Aorta (tissue), 5 donors: ENCODE measurements at regions of chr2 and their contacts with region 1.

Region 1: GRCh38 chr2:108533832-108534583 is at the start of gene LIMS1:
- DNase-seq: peak; percentile 95 to 98
- ATAC-seq: peak; percentile 98
- H3K4me3 ChIP-seq: peak within 1 kb of the TSS; percentile 70 to 99
- H3K27ac ChIP-seq: peak within 1 kb of the TSS; percentile 54 to 94
- H3K4me1 ChIP-seq: peaks cover 0 to 4% of the 10 kb centered on the region in 2 donors
- H3K27me3 ChIP-seq: no peaks in the 10 kb centered on the region
- total RNA-seq, gene LIMS1: 76.7 to 100 TPM

Region 2: DNA sequence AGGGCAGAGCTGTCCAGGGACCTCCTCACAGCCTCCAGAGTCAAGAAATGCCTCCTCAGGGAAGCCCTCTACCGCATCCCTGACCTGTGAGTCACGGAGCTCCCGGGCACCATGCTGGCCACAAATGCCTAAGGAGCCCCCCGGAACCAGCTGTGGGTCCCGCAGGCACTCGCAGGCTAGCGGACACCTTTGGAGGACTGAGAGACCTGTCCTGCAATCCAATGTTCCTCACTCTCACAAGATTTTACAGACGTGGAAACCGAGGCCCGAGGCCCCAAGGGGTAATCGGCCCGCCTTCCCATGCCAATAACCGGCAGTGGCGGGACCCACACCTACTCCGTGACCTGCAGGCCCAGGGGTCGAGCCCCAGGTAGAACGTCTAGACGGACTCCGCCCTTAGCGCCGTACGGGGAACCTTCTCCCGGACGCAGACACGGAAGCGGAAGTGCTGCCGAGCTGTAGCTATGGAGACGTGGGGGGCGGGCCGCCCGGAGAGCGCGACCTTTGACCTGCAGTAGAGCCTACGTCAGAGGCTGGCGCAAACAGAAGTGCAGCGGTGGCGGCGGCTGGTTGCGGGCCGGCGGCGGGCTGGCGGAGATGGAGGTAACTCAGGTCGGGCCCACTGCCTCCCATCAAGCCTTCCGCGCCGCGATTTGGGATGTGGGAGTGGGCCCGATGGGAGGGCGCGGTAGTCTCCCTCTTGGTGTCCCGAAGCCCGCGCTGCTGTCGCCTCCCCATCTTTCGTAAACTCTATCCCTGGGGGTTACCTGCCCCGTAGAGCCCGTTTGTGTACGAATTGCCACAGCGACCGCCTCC is 85.1 kb before region 1 on chr2 and contains the start of gene GCC2:
- intact Hi-C with region 1: loop called in 1 of 2 experiments (anchors 5 kb)
- DNase-seq: peak; percentile 97 to 98
- ATAC-seq: peak; percentile 99
- H3K4me3 ChIP-seq: peak within 1 kb of the TSS; percentile 65 to 93
- H3K27ac ChIP-seq: peak within 1 kb of the TSS in 1 of 2 donors; percentile 49
- H3K4me1 ChIP-seq: no peaks in the 10 kb centered on the region
- H3K27me3 ChIP-seq: no peaks in the 10 kb centered on the region
- total RNA-seq, gene GCC2: 52.1 to 64.6 TPM

Region 3: DNA sequence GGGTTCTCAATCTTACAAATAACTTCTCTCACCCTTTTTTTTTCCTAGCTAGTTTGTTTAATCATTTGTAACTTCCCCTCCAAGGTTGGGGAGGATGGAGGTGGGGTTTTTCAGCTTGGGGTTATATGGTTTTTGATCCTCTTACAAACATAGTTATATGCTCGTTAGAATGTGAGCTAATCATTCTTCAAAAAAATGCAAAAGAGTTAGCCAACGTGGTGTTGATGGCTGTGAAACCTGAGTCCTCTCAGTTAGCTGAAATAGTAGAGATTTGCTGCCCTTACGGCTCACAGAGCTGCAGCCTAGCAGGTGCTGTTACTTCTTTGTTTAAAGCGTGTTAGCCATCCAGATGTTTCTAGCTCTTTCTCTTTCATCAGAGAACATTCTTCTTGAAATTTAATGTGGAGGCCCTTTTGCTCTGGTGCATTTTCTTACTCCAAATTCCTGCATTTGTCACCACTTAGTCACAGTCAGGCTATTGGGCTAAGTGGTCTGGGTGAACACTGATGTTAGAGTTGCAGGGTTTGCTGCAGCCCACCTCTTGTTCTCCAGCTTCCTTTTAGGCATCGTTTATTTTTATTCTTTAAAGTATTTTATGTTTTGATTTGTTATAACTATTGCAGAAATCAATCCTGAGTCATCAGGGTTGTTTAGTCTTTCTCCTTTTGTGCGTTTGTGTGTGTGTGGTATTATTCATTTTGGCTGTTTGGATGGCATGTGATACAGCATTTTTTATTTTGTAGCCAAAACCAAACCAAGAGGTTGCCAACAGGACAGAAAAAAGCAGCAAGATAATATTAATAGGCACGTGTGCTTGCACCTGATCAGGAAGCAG is 41.3 kb after region 1 on chr2:
- intact Hi-C with region 1: loop called (anchors 5 kb)
- DNase-seq: no peak
- ATAC-seq: no peak
- H3K4me3 ChIP-seq: no peak overlapping the region
- H3K27ac ChIP-seq: no peak overlapping the region
- H3K4me1 ChIP-seq: peaks cover 6 to 11% of the 10 kb centered on the region in 2 donors
- H3K27me3 ChIP-seq: no peaks in the 10 kb centered on the region

Region 4: GRCh38 chr2:108938077-108938710 is 404.2 kb after region 1 on chr2:
- intact Hi-C with region 1: no loop called
- DNase-seq: peak in 1 of 2 donors; percentile 5
- ATAC-seq: no peak
- H3K4me3 ChIP-seq: no peak overlapping the region
- H3K27ac ChIP-seq: no peak overlapping the region
- H3K4me1 ChIP-seq: no peaks in the 10 kb centered on the region
- H3K27me3 ChIP-seq: no peaks in the 10 kb centered on the region